ENCODE measurements at regions of chr14 and their contacts with region 1.

Region 1: GRCh38 chr14:75709207-75709812 is 48.3 kb downstream of the TTLL5 start:
- DNase-seq: peak; percentile 83
- H3K4me3 ChIP-seq: no peak overlapping the region
- H3K27ac ChIP-seq: no peak overlapping the region
- H3K4me1 ChIP-seq: peaks cover 3% of the 10 kb centered on the region
- H3K27me3 ChIP-seq: no peaks in the 10 kb centered on the region
- CTCF ChIP-seq: peak; percentile 45 to 84 (median 80)
- POLR2A ChIP-seq: no peak

Region 2: GRCh38 chr14:75794615-75795038 is 85.3 kb after region 1 on chr14:
- intact Hi-C with region 1: loop called (anchors 1 kb)
- DNase-seq: no peak
- H3K4me3 ChIP-seq: no peak overlapping the region
- H3K27ac ChIP-seq: no peak overlapping the region
- H3K4me1 ChIP-seq: no peaks in the 10 kb centered on the region
- H3K27me3 ChIP-seq: no peaks in the 10 kb centered on the region
- CTCF ChIP-seq: peak in 3 of 4 experiments; percentile 50 to 61 (median 55)
- POLR2A ChIP-seq: no peak

Region 3: GRCh38 chr14:75989134-75989533 is 279.8 kb after region 1 on chr14:
- intact Hi-C with region 1: no loop called
- DNase-seq: no peak
- H3K4me3 ChIP-seq: no peak overlapping the region
- H3K27ac ChIP-seq: no peak overlapping the region
- H3K4me1 ChIP-seq: peaks cover 1% of the 10 kb centered on the region
- H3K27me3 ChIP-seq: no peaks in the 10 kb centered on the region
- CTCF ChIP-seq: no peak
- POLR2A ChIP-seq: no peak